CD4-positive, alpha-beta memory T cell (primary cell): ENCODE measurements at regions of chr2 and their contacts with region 1.

Region 1: GRCh38 chr2:41869542-41870264 is 178.1 kb upstream of the PKDCC start:
- DNase-seq: peak; percentile 56 to 69 (median 63)
- H3K4me3 ChIP-seq: no peak overlapping the region
- H3K4me3 Mint-ChIP-seq: no peak overlapping the region
- H3K27ac ChIP-seq: no peak overlapping the region
- H3K27ac Mint-ChIP-seq: peak overlapping the region in 3 of 7 donors; percentile 22 to 49 (median 45)
- H3K4me1 ChIP-seq: peaks cover 25% of the 10 kb centered on the region
- H3K4me1 Mint-ChIP-seq: peaks cover 10 to 55% (median 27%) of the 10 kb centered on the region in 4 donors
- H3K27me3 ChIP-seq: no peaks in the 10 kb centered on the region
- H3K27me3 Mint-ChIP-seq: peaks cover 0 to 4% of the 10 kb centered on the region in 2 donors

Region 2: DNA sequence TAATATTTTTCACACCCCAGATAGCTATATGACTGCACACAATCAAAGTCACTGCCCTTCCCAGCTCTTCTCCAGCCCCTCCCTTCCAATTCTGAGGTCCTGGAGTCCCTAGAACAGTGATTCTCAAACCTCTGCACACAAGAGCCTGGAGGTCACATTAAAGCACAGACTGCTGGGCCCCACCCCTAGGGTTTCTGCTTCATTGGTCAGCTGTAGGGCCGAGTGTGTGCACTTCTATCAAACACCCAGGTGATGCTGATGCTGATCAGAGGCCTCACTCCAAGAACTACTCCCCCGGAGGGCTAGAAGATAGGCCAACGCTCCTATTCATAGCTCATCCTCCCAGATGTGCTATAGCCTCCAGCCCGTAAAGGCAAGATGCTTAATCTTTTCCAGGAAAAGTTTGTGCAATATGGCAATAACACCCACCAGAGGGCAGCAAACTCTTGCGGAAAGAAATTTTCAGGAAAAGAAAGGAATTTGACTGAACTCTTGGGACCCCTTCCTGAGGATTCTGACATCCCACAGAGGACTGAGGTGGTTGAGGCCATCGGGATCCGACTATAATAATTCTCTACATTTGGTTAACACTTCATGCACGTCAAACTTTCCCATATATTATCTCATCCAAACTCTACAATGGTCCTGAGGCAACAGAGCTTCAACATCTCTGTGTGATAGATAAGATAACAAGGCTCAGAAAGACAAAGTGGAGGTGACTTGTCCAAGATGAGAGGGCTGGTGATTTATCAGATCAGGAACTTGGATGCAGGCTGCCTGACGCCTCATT is 16.1 kb before region 1 on chr2:
- CTCF ChIA-PET with region 1: interaction called, 31 read pairs
- POLR2A ChIA-PET with region 1: interaction called, 3 read pairs
- intact Hi-C with region 1: no loop called
- DNase-seq: peak in 1 of 5 donors; percentile 14
- H3K4me3 ChIP-seq: no peak overlapping the region
- H3K4me3 Mint-ChIP-seq: no peak overlapping the region
- H3K27ac ChIP-seq: no peak overlapping the region
- H3K27ac Mint-ChIP-seq: no peak overlapping the region
- H3K4me1 ChIP-seq: peaks cover 4% of the 10 kb centered on the region
- H3K4me1 Mint-ChIP-seq: no peaks in the 10 kb centered on the region
- H3K27me3 ChIP-seq: no peaks in the 10 kb centered on the region
- H3K27me3 Mint-ChIP-seq: peaks cover 18 to 21% of the 10 kb centered on the region in 2 donors

Region 3: GRCh38 chr2:41896186-41896846 is 26.6 kb after region 1 on chr2:
- CTCF ChIA-PET with region 1: interaction called, 24 read pairs
- POLR2A ChIA-PET with region 1: interaction called, 5 read pairs
- intact Hi-C with region 1: no loop called
- DNase-seq: peak; percentile 62 to 76 (median 67)
- H3K4me3 ChIP-seq: no peak overlapping the region
- H3K4me3 Mint-ChIP-seq: peak overlapping the region in 7 of 8 donors; percentile 47 to 79 (median 62)
- H3K27ac ChIP-seq: no peak overlapping the region
- H3K27ac Mint-ChIP-seq: peak overlapping the region; percentile 69 to 96 (median 91)
- H3K4me1 ChIP-seq: peaks cover 43% of the 10 kb centered on the region
- H3K4me1 Mint-ChIP-seq: peaks cover 10 to 49% (median 36%) of the 10 kb centered on the region in 4 donors
- H3K27me3 ChIP-seq: no peaks in the 10 kb centered on the region
- H3K27me3 Mint-ChIP-seq: peaks cover 0 to 2% of the 10 kb centered on the region in 2 donors

Region 4: GRCh38 chr2:42196403-42197267 is 326.9 kb after region 1 on chr2:
- CTCF ChIA-PET with region 1: interaction called, 4 read pairs
- POLR2A ChIA-PET with region 1: no interaction called
- intact Hi-C with region 1: loop called (anchors 5 kb)
- DNase-seq: peak; percentile 56 to 66 (median 63)
- H3K4me3 ChIP-seq: no peak overlapping the region
- H3K4me3 Mint-ChIP-seq: peak overlapping the region in 7 of 8 donors; percentile 7 to 67 (median 51)
- H3K27ac ChIP-seq: no peak overlapping the region
- H3K27ac Mint-ChIP-seq: peak overlapping the region; percentile 40 to 87 (median 74)
- H3K4me1 ChIP-seq: peaks cover 97% of the 10 kb centered on the region
- H3K4me1 Mint-ChIP-seq: peaks cover 59 to 94% (median 74%) of the 10 kb centered on the region in 4 donors
- H3K27me3 ChIP-seq: no peaks in the 10 kb centered on the region
- H3K27me3 Mint-ChIP-seq: no peaks in the 10 kb centered on the region

Region 5: GRCh38 chr2:42328148-42328833 is 458.6 kb after region 1 on chr2:
- CTCF ChIA-PET with region 1: interaction called, 16 read pairs
- POLR2A ChIA-PET with region 1: interaction called, 3 read pairs
- intact Hi-C with region 1: loop called (anchors 1 kb)
- DNase-seq: peak in 4 of 5 donors; percentile 31 to 37 (median 33)
- H3K4me3 ChIP-seq: no peak overlapping the region
- H3K4me3 Mint-ChIP-seq: no peak overlapping the region
- H3K27ac ChIP-seq: no peak overlapping the region
- H3K27ac Mint-ChIP-seq: peak overlapping the region; percentile 0 to 85 (median 62)
- H3K4me1 ChIP-seq: no peaks in the 10 kb centered on the region
- H3K4me1 Mint-ChIP-seq: peaks cover 2 to 9% (median 5%) of the 10 kb centered on the region in 4 donors
- H3K27me3 ChIP-seq: no peaks in the 10 kb centered on the region
- H3K27me3 Mint-ChIP-seq: no peaks in the 10 kb centered on the region

Region 6: GRCh38 chr2:42663106-42663780 is 793.5 kb after region 1 on chr2:
- CTCF ChIA-PET with region 1: interaction called, 35 read pairs
- POLR2A ChIA-PET with region 1: no interaction called
- intact Hi-C with region 1: loop called (anchors 1 kb)
- DNase-seq: peak; percentile 52 to 60 (median 56)
- H3K4me3 ChIP-seq: no peak overlapping the region
- H3K4me3 Mint-ChIP-seq: no peak overlapping the region
- H3K27ac ChIP-seq: no peak overlapping the region
- H3K27ac Mint-ChIP-seq: peak overlapping the region in 1 of 7 donors; percentile 14
- H3K4me1 ChIP-seq: no peaks in the 10 kb centered on the region
- H3K4me1 Mint-ChIP-seq: peaks cover 0 to 4% (median 1%) of the 10 kb centered on the region in 4 donors
- H3K27me3 ChIP-seq: no peaks in the 10 kb centered on the region
- H3K27me3 Mint-ChIP-seq: no peaks in the 10 kb centered on the region